Ascending aorta (tissue), 2 donors: ENCODE measurements at regions of chr22 and their contacts with region 1.

Region 1: GRCh38 chr22:41688365-41689211 is at the start of gene SNU13:
- DNase-seq: peak; percentile 71 to 96
- H3K4me3 ChIP-seq: peak within 1 kb of the TSS; percentile 81 to 84
- H3K27ac ChIP-seq: peak within 1 kb of the TSS; percentile 97 to 99
- H3K4me1 ChIP-seq: peaks cover 0 to 12% of the 10 kb centered on the region in 2 donors
- H3K27me3 ChIP-seq: no peaks in the 10 kb centered on the region
- CTCF ChIP-seq: no peak
- total RNA-seq, gene SNU13: 111 TPM

Region 2: DNA sequence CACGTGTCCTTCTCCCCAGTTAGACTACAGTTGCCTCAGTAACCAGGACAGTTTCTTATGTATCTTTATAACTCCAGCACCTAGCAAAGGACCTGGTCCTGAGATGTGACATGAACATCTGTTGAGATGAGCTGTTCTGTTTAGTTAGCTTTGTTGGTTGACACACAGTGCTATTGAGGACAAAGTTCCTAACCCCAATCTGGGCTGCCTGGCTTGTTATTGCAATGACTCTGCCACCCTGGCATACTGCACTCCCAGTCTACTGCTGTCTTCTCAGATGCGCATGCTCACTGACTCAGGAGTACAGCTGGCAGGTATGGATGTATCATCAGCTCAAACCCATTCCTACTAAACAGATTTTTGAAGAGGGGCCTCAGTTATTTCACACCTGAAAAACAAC is 75.1 kb before region 1 on chr22:
- intact Hi-C with region 1: no loop called
- DNase-seq: no peak
- H3K4me3 ChIP-seq: no peak overlapping the region
- H3K27ac ChIP-seq: no peak overlapping the region
- H3K4me1 ChIP-seq: no peaks in the 10 kb centered on the region
- H3K27me3 ChIP-seq: no peaks in the 10 kb centered on the region
- CTCF ChIP-seq: no peak

Region 3: GRCh38 chr22:41666661-41667258 is 21.8 kb before region 1 on chr22:
- intact Hi-C with region 1: loop called (anchors 2 kb)
- DNase-seq: peak; percentile 59 to 94
- H3K4me3 ChIP-seq: peak overlapping the region in 1 of 2 donors; percentile 51
- H3K27ac ChIP-seq: peak overlapping the region; percentile 72 to 84
- H3K4me1 ChIP-seq: peaks cover 0 to 4% of the 10 kb centered on the region in 2 donors
- H3K27me3 ChIP-seq: no peaks in the 10 kb centered on the region
- CTCF ChIP-seq: peak; percentile 97 to 98 (median 97)

Region 4: DNA sequence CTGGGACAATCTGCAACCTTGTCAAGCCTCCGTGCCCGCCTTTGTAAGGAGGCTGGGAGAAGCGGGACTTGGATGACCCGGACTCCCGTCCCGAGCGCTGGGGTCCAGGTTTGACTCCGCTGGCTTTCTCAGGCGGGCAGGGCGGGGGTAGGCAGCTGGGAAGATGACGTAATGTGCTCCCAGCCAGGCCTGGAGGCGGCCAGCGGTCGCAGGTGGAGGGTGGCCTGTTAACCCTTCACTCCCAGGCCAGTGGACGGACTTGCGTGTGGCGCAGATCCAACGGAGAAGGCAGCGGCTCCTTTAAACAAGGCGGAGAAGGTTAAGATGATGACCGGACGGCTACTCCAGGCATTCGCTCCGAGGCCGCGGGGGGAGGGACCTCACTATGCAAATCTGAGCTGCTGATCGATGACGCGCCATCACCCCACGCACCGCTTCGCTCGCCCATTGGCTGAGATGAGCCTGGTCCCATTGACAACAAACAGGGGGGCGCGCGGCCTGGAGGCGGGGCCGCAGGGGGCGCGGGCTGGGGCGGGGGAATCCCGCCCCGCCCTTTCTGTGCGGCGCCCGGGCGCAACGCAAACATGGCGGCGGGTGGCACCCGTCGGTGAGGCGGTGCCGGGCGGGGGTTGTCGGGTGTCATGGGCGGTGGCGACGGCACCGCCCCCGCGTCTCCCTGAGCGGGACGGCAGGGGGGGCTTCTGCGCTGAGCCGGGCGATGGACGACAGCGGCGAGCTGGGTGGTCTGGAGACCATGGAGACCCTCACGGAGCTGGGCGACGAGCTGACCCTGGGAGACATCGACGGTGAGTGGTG is 144.2 kb after region 1 on chr22 and contains the start of gene SREBF2:
- intact Hi-C with region 1: loop called (anchors 2 kb)
- DNase-seq: peak; percentile 99 to 100
- H3K4me3 ChIP-seq: peak within 1 kb of the TSS; percentile 90 to 97
- H3K27ac ChIP-seq: peak within 1 kb of the TSS; percentile 92
- H3K4me1 ChIP-seq: peaks cover 0 to 5% of the 10 kb centered on the region in 2 donors
- H3K27me3 ChIP-seq: no peaks in the 10 kb centered on the region
- CTCF ChIP-seq: peak in 1 of 3 experiments; percentile 8
- total RNA-seq, gene SREBF2: 46.1 TPM

Region 5: GRCh38 chr22:41946629-41947423 is 258.2 kb after region 1 on chr22 and contains the start of gene CENPM:
- intact Hi-C with region 1: loop called (anchors 2 kb)
- DNase-seq: peak; percentile 70 to 93
- H3K4me3 ChIP-seq: peak within 1 kb of the TSS; percentile 64 to 75
- H3K27ac ChIP-seq: no peak within 1 kb of the TSS
- H3K4me1 ChIP-seq: peaks cover 0 to 8% of the 10 kb centered on the region in 2 donors
- H3K27me3 ChIP-seq: no peaks in the 10 kb centered on the region
- CTCF ChIP-seq: no peak
- total RNA-seq, gene CENPM: not detected